ENCODE measurements at regions of chr11 and their contacts with region 1.

Region 1: DNA sequence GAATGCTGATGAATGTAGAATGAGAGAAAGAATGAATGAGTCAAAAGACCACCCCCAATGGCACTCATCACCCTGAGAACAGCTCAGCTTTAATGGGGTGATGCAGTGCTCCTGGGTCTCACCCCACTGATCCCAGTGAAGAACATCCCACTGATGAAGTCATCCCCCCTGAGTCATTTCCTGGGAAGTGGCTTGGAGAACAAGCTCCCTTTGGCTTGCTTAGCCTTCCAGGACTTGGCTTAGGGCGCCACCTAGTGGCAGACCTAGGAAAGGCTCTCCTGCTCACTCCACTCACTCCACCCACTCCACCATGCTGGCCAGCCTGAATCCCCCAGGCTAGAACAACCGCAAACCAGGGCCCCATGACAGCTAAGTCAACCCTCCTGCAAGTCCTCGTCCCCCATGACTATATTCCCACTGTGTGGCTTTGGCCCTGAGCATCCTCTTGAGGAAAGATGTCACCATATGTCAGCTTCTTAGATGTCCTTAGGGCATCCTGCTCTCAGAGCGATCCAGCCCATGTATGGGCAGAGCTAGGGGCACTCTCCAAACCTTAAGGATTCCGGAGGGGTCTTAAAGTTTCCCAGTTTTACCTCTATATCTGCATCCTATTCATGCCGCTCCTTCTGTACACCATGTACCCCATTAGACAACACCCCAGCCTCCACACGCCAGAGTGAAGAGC is 17.8 kb upstream of the TMPRSS13 start:
- DNase-seq: peak; percentile 86
- H3K4me3 Mint-ChIP-seq: no peak overlapping the region
- H3K27ac Mint-ChIP-seq: peak overlapping the region; percentile 53
- H3K4me1 Mint-ChIP-seq: peaks cover 85% of the 10 kb centered on the region
- H3K27me3 Mint-ChIP-seq: peaks cover 11% of the 10 kb centered on the region

Region 2: GRCh38 chr11:117817368-117818040 is 129.5 kb before region 1 on chr11:
- CTCF ChIA-PET with region 1: interaction called, 137 read pairs
- DNase-seq: peak; percentile 88
- H3K4me3 Mint-ChIP-seq: no peak overlapping the region
- H3K27ac Mint-ChIP-seq: peak overlapping the region; percentile 80
- H3K4me1 Mint-ChIP-seq: peaks cover 54% of the 10 kb centered on the region
- H3K27me3 Mint-ChIP-seq: peaks cover 4% of the 10 kb centered on the region

Region 3: GRCh38 chr11:117861151-117862018 is 85.6 kb before region 1 on chr11:
- CTCF ChIA-PET with region 1: interaction called, 12 read pairs
- DNase-seq: no peak
- H3K4me3 Mint-ChIP-seq: no peak overlapping the region
- H3K27ac Mint-ChIP-seq: no peak overlapping the region
- H3K4me1 Mint-ChIP-seq: peaks cover 2% of the 10 kb centered on the region
- H3K27me3 Mint-ChIP-seq: peaks cover 31% of the 10 kb centered on the region

Region 4: GRCh38 chr11:117932067-117932370 is 15.0 kb before region 1 on chr11:
- CTCF ChIA-PET with region 1: interaction called, 38 read pairs
- DNase-seq: no peak
- H3K4me3 Mint-ChIP-seq: no peak overlapping the region
- H3K27ac Mint-ChIP-seq: peak overlapping the region; percentile 47
- H3K4me1 Mint-ChIP-seq: peaks cover 52% of the 10 kb centered on the region
- H3K27me3 Mint-ChIP-seq: peaks cover 40% of the 10 kb centered on the region

Region 5: DNA sequence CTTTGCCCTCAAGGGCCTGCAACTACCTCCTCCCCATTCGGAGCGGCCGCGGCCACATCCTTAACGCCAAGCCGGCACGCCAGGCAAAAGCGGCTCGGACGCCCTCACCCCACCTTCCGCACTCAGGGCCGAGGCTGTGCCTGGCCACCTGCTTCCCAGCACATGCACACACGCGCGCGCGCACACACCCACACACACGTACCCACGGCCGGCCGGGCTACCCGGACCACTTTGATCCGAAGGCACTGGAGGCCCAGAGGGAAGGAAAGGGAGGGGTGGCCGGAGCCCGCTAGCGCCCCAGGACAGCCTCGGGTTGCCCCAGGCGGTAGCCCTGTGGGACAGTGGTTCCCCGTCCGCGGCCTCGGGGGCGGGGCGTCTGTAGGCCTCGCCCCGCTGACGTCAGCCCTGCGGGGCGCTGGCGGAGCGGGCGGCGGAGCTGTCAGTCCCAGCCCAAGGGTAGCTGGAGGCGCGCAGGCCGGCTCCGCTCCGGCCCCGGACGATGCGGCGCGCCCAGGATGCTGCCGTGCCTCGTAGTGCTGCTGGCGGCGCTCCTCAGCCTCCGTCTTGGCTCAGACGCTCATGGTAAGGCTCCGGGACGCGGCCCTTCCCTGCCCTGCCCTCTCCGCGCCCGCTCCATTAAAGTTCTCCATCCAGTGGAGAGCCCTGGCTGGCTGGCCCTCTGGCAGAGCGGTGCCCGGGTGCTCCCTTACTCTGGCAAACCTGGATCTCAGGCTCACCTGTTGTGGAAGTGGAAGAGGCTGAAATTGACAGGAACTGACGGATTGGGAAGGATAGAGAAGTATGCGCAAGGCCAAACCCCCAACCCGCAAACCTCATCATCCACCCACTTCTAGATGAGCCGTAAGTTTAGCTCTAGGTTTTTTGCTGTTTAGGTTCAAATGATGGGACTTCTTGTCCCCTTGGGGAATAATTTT is 39.2 kb after region 1 on chr11 and contains the start of gene IL10RA:
- CTCF ChIA-PET with region 1: interaction called, 30 read pairs
- DNase-seq: peak; percentile 87
- H3K4me3 Mint-ChIP-seq: peak within 1 kb of the TSS; percentile 82
- H3K27ac Mint-ChIP-seq: peak within 1 kb of the TSS; percentile 97
- H3K4me1 Mint-ChIP-seq: peaks cover 73% of the 10 kb centered on the region
- H3K27me3 Mint-ChIP-seq: no peaks in the 10 kb centered on the region

Region 6: DNA sequence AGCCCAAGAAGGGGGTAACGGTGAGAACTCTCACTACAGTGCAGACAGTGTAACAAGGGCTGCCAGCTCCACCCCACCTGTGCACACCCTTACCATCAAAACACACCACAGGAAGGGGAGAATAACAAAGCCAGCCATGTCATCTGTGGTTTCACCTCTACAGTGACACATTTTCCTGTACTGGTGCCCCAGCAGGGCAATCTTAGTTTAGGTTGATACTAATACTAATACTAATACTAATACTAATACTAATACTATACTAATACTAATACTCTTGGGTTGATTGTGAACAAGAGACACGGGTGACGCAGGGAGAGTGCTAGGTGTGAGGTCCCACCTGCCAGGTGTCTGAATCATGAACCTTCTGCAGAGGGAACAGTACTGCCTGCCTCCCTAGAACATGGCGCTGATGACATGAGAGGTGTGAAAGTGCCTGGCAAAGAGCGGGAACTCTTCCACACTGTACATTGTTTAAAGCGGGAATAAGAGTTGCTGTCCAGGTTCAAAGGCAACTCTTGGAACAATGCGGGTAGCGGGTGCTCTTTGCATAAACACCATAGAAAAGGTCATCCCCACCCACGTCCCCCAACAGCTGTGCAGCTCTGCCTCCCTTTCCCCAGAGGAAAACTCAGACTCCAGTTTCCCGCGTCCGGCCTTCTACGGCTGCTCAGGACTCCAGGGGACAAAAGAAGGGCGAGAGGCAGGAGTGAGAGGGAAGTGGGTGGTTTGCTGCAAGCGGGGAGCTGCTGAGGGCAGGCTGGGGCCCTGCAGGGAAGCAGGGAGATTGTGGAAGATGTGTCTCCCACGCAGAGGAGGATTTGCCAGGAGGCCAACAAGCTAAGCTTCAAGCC is 104.9 kb after region 1 on chr11:
- CTCF ChIA-PET with region 1: interaction called, 304 read pairs
- DNase-seq: peak; percentile 85
- H3K4me3 Mint-ChIP-seq: peak overlapping the region; percentile 43
- H3K27ac Mint-ChIP-seq: peak overlapping the region; percentile 98
- H3K4me1 Mint-ChIP-seq: peaks cover 53% of the 10 kb centered on the region
- H3K27me3 Mint-ChIP-seq: peaks cover 9% of the 10 kb centered on the region

Measured in activated naive CD4-positive, alpha-beta T cell treated with anti-CD3 and anti-CD28 coated beads, Interleukin-2, amount 10 ng/mL, durations not matched to agents 7 days and 5 days (primary cell).